ENCODE measurements at regions of chr15 and their contacts with region 1.

Region 1: DNA sequence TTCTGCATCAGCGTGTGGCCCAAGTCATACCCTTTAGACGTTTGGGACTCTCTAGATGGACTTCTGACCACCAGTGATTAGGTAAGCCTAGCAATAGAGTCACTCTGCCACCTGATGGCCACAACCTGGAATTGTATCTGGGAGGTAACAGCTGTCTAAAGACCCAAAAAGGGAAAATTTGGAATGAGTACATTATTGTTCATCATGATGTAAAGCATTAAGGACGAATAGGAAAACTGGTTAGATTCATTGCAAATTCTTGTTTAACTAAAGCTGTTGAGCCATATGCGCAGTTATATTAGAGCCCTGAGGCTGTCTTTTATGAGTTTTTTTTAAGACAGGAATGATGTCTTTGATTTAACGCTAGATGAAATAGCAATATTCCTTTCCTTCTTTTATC is 63.6 kb downstream of the FAM81A start:
- DNase-seq: peak; percentile 69 to 72
- H3K4me3 ChIP-seq: no peak overlapping the region
- H3K4me3 Mint-ChIP-seq: no peak overlapping the region
- H3K27ac Mint-ChIP-seq: no peak overlapping the region
- H3K4me1 ChIP-seq: no peaks in the 10 kb centered on the region
- H3K4me1 Mint-ChIP-seq: no peaks in the 10 kb centered on the region
- H3K27me3 ChIP-seq: no peaks in the 10 kb centered on the region
- H3K27me3 Mint-ChIP-seq: peaks cover 3% of the 10 kb centered on the region
- CTCF ChIP-seq: peak; percentile 68 to 78

Region 2: GRCh38 chr15:58957101-58957973 is 544.3 kb before region 1 on chr15:
- CTCF ChIA-PET with region 1: interaction called, 3 read pairs
- POLR2A ChIA-PET with region 1: no interaction called
- intact Hi-C with region 1: loop called (anchors 1 kb)
- DNase-seq: peak; percentile 63 to 78
- H3K4me3 ChIP-seq: no peak overlapping the region
- H3K4me3 Mint-ChIP-seq: no peak overlapping the region
- H3K27ac Mint-ChIP-seq: no peak overlapping the region
- H3K4me1 ChIP-seq: no peaks in the 10 kb centered on the region
- H3K4me1 Mint-ChIP-seq: peaks cover 7% of the 10 kb centered on the region
- H3K27me3 ChIP-seq: no peaks in the 10 kb centered on the region
- H3K27me3 Mint-ChIP-seq: no peaks in the 10 kb centered on the region
- CTCF ChIP-seq: peak; percentile 82 to 90

Region 3: GRCh38 chr15:59138243-59138642 is 363.4 kb before region 1 on chr15:
- CTCF ChIA-PET with region 1: no interaction called
- POLR2A ChIA-PET with region 1: no interaction called
- intact Hi-C with region 1: loop called (anchors 1 kb)
- DNase-seq: peak; percentile 59 to 75
- H3K4me3 ChIP-seq: no peak overlapping the region
- H3K4me3 Mint-ChIP-seq: no peak overlapping the region
- H3K27ac Mint-ChIP-seq: no peak overlapping the region
- H3K4me1 ChIP-seq: no peaks in the 10 kb centered on the region
- H3K4me1 Mint-ChIP-seq: no peaks in the 10 kb centered on the region
- H3K27me3 ChIP-seq: no peaks in the 10 kb centered on the region
- H3K27me3 Mint-ChIP-seq: no peaks in the 10 kb centered on the region
- CTCF ChIP-seq: peak; percentile 62 to 73

Region 4: DNA sequence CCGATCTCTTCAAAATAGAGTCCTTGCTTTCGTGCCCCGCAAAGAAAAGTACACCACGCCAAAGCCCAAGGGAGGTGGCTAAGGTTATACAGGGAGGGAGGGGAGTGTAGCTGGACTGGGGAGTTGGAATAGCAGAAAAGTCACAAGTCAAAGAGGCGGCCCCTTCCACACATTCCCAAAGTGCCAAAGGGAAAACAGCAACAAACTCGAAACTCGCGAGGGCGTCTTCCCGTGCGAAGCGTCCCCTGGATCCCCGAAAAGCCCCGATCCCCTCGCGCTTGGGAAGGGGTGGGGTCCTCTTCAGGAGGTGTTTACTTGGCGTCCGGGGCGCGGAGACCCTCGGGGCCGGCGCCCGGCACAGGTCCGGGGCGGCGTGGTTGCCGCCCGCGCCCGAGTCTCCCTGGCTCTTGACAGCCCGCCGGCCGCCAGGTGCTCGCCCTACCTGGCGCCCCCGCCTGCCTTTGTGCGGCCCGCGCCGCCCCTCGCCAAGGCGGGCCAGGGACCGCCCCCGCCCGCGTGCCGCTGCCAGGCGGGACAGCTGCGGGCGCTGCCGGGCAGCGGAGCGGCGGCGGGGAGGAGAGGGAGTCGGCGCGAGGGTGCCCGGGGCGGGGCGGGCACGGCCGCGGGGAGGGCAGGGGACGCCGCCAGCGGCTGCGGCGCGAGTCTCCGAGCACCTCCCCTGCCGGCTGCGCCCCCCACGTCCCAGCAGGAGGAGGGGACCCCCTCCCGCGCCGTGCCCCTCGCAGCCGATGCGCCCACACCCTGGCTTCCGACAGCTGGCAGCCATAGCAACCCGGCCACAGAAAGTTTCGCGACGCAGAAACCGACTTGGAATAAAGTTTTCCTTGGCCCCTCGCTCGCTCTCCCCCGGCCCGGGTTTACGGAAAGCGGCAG is 129.9 kb before region 1 on chr15:
- CTCF ChIA-PET with region 1: no interaction called
- POLR2A ChIA-PET with region 1: no interaction called
- intact Hi-C with region 1: no loop called
- DNase-seq: peak in 1 of 2 experiments; percentile 65
- H3K4me3 ChIP-seq: peak overlapping the region; percentile 96
- H3K4me3 Mint-ChIP-seq: peak overlapping the region; percentile 98
- H3K27ac Mint-ChIP-seq: peak overlapping the region; percentile 97
- H3K4me1 ChIP-seq: peaks cover 39% of the 10 kb centered on the region
- H3K4me1 Mint-ChIP-seq: peaks cover 16% of the 10 kb centered on the region
- H3K27me3 ChIP-seq: no peaks in the 10 kb centered on the region
- H3K27me3 Mint-ChIP-seq: no peaks in the 10 kb centered on the region
- CTCF ChIP-seq: no peak

Measured in Caco-2 (cell line).